ENCODE measurements at regions of chr3 and their contacts with region 1.

Region 1: GRCh38 chr3:112043603-112044201 is 9.2 kb downstream of the TMPRSS7 start:
- DNase-seq: peak; percentile 70
- ATAC-seq: peak; percentile 99
- H3K4me3 Mint-ChIP-seq: no peak overlapping the region
- H3K27ac Mint-ChIP-seq: no peak overlapping the region
- H3K4me1 Mint-ChIP-seq: peaks cover 2% of the 10 kb centered on the region
- H3K27me3 Mint-ChIP-seq: no peaks in the 10 kb centered on the region
- CTCF ChIP-seq: peak; percentile 89

Region 2: DNA sequence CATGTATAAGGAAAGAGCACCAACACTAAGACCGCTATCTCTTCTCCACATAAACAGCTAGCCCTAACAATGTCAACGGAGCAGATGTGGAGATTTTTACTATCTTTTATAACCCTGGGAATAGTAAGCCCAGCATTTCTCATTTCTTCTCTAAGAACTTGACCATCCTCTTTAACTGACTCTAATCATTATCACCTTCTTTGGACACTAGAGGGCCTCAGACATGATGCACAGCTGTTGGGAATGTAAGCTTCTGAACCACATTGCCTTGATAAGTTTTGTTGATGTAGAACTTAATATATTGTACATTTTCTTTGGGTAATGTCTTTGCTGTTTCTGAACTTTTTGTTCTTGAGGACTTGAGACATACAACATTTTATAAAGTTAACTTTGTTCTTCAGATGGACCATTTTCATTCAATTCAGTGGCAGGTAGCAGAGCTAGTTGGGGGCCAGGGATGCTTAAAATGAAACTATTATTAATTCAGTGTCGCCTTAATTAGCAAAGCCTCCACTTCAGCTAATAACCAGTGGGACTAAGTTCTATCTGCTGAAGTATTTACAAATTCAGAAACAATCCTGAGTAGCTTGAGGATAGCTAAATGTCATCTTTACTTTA is 54.5 kb before region 1 on chr3:
- CTCF ChIA-PET with region 1: interaction called, 98 read pairs
- POLR2A ChIA-PET with region 1: no interaction called
- intact Hi-C with region 1: loop called (anchors 5 kb)
- DNase-seq: no peak
- ATAC-seq: peak; percentile 68
- H3K4me3 Mint-ChIP-seq: no peak overlapping the region
- H3K27ac Mint-ChIP-seq: peak overlapping the region; percentile 28
- H3K4me1 Mint-ChIP-seq: peaks cover 34% of the 10 kb centered on the region
- H3K27me3 Mint-ChIP-seq: no peaks in the 10 kb centered on the region
- CTCF ChIP-seq: peak; percentile 71

Region 3: GRCh38 chr3:112007633-112008032 is 36.1 kb before region 1 on chr3:
- CTCF ChIA-PET with region 1: interaction called, 74 read pairs
- POLR2A ChIA-PET with region 1: no interaction called
- intact Hi-C with region 1: no loop called
- DNase-seq: no peak
- ATAC-seq: no peak
- H3K4me3 Mint-ChIP-seq: no peak overlapping the region
- H3K27ac Mint-ChIP-seq: no peak overlapping the region
- H3K4me1 Mint-ChIP-seq: peaks cover 30% of the 10 kb centered on the region
- H3K27me3 Mint-ChIP-seq: no peaks in the 10 kb centered on the region
- CTCF ChIP-seq: no peak

Region 4: DNA sequence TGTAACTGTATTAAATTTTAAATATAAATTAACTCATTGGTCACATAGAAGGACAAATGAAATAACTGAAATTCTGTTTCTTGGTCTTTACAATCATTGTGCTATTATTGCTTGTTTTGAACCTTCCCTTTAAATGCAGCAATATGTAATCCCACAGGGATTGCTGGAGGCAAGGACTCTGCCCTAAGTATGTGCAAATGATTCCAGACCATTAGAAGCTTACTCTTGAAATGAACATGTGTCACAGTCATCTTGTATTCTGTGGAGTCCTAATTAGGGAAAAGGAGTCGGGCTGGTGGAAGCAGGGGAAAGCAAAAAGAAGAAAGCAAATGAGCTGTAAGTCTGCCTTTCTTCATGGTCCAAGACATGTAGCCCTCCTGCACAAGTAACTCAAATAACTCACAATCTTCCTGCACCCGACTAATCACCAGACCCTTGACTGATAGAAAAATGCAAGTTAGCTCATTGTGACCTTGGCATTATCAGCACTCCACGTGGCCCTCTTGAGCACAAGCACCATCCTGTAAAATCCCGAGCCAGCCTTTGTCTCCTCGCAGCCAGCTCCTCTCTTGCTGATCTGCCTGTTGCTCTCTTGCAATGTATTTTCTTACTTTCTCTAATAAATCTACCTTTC is 11.5 kb before region 1 on chr3:
- CTCF ChIA-PET with region 1: interaction called, 26 read pairs
- POLR2A ChIA-PET with region 1: no interaction called
- intact Hi-C with region 1: no loop called
- DNase-seq: no peak
- ATAC-seq: no peak
- H3K4me3 Mint-ChIP-seq: no peak overlapping the region
- H3K27ac Mint-ChIP-seq: no peak overlapping the region
- H3K4me1 Mint-ChIP-seq: no peaks in the 10 kb centered on the region
- H3K27me3 Mint-ChIP-seq: no peaks in the 10 kb centered on the region
- CTCF ChIP-seq: no peak

Region 5: DNA sequence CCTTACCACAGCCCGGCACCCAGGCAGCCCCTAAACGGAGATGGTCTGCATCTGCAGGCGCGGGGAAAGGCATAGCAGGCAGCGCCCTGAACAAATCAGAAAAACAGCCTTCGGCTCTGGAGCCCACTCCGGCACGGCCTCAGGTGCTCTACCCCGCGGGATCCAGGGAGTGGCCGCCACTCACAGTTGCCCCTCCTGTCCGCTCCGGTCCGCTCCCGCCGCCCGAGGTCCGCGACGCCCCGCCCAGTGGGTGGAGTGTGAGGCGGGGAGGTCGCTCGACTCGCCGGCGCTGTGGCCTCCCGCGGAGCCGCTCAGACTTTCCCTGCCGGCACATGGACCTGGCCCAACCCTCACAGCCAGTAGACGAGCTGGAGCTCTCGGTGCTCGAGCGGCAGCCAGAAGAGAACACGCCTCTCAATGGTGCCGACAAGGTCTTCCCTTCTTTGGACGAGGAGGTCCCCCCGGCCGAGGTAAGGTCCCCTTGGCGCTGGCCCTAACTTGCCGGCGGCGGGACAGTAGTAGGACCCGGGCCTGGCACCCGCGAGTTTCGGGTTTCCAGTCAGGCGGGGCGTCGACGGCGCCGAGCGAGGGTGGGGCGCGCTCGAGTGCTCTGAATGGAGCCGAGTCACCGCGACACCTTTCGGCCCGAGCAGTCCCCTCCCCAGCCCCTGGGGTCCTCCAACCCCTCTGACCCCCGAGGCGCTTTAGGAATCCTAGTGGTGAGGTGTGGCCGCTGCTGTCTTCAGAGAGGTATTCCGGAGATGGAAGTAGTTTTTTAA is 42.6 kb after region 1 on chr3 and contains the start of gene C3orf52:
- CTCF ChIA-PET with region 1: no interaction called
- POLR2A ChIA-PET with region 1: no interaction called
- intact Hi-C with region 1: no loop called
- DNase-seq: peak; percentile 69
- ATAC-seq: peak; percentile 89
- H3K4me3 Mint-ChIP-seq: peak within 1 kb of the TSS; percentile 75
- H3K27ac Mint-ChIP-seq: peak within 1 kb of the TSS; percentile 68
- H3K4me1 Mint-ChIP-seq: peaks cover 20% of the 10 kb centered on the region
- H3K27me3 Mint-ChIP-seq: peaks cover 22% of the 10 kb centered on the region
- CTCF ChIP-seq: no peak
- total RNA-seq, gene C3orf52: 2.0 to 3.3 TPM

Measured in activated CD8-positive, alpha-beta T cell treated with anti-CD3 and anti-CD28 coated beads for 36 hours (primary cell).